CD8-positive, alpha-beta T cell (primary cell): ENCODE measurements at regions of chr6 and their contacts with region 1.

Region 1: GRCh38 chr6:34055223-34055933 is 90.5 kb downstream of the GRM4 start:
- DNase-seq: peak; percentile 30 to 77 (median 66)
- ATAC-seq: peak; percentile 84
- H3K4me3 ChIP-seq: no peak overlapping the region
- H3K4me3 Mint-ChIP-seq: no peak overlapping the region
- H3K27ac ChIP-seq: no peak overlapping the region
- H3K27ac Mint-ChIP-seq: no peak overlapping the region
- H3K4me1 ChIP-seq: no peaks in the 10 kb centered on the region
- H3K4me1 Mint-ChIP-seq: no peaks in the 10 kb centered on the region
- H3K27me3 ChIP-seq: no peaks in the 10 kb centered on the region
- H3K27me3 Mint-ChIP-seq: peaks cover 9% of the 10 kb centered on the region
- CTCF ChIP-seq: peak; percentile 62

Region 2: GRCh38 chr6:34098045-34098936 is 42.9 kb after region 1 on chr6:
- CTCF ChIA-PET with region 1: no interaction called
- POLR2A ChIA-PET with region 1: no interaction called
- intact Hi-C with region 1: no loop called
- DNase-seq: no peak
- ATAC-seq: no peak
- H3K4me3 ChIP-seq: no peak overlapping the region
- H3K4me3 Mint-ChIP-seq: no peak overlapping the region
- H3K27ac ChIP-seq: no peak overlapping the region
- H3K27ac Mint-ChIP-seq: no peak overlapping the region
- H3K4me1 ChIP-seq: no peaks in the 10 kb centered on the region
- H3K4me1 Mint-ChIP-seq: no peaks in the 10 kb centered on the region
- H3K27me3 ChIP-seq: no peaks in the 10 kb centered on the region
- H3K27me3 Mint-ChIP-seq: peaks cover 31% of the 10 kb centered on the region
- CTCF ChIP-seq: no peak

Region 3: DNA sequence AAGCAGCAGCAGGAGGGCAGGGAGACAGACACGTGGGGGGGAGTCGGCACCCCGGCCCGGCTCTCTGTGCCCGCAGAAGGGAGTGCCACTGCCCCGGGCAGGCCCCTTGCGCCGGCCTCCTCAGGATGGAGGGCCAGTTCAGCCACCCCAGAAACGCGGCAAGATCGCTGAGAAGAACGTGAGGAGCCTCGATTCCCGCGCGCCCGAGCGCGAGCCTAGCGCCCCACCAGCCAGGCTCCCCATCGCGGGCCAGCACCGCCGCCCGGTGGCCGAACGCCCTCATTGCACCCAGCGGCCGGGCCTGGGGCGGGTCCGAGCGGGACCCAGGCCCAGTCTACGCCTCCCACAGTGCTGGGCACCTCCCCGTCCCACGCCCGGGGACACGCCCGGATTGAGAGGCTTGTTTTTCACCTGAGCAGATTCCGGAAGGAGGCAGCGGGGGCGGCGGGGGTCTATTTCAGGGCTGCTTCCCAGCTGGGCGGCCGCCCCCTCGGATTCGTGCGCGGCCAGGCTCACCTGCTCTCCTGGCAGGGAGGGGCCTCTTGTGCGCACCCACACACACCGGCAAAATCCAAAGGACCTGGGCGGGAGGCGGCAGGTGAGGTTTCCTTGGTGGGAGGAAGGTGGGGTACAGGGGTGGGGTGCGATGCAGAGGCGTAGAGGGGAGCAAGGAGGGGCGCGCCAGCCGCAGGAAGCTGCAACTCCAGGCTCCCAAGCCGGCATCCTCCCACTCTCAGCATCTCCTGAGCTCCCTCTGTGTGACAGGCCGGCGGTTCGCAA is 99.5 kb after region 1 on chr6:
- CTCF ChIA-PET with region 1: interaction called, 77 read pairs
- POLR2A ChIA-PET with region 1: no interaction called
- intact Hi-C with region 1: loop called in 1 of 2 experiments (anchors 1 kb)
- DNase-seq: peak; percentile 46 to 84 (median 68)
- ATAC-seq: peak; percentile 99
- H3K4me3 ChIP-seq: peak overlapping the region in 1 of 2 experiments; percentile 20
- H3K4me3 Mint-ChIP-seq: no peak overlapping the region
- H3K27ac ChIP-seq: no peak overlapping the region
- H3K27ac Mint-ChIP-seq: no peak overlapping the region
- H3K4me1 ChIP-seq: peaks cover 14% of the 10 kb centered on the region
- H3K4me1 Mint-ChIP-seq: peaks cover 6% of the 10 kb centered on the region
- H3K27me3 ChIP-seq: peaks cover 9 to 17% of the 10 kb centered on the region in 2 experiments
- H3K27me3 Mint-ChIP-seq: peaks cover 28% of the 10 kb centered on the region
- CTCF ChIP-seq: peak; percentile 97